Mammary epithelial cell (primary cell): ENCODE measurements at regions of chr2 and their contacts with region 1.

Region 1: DNA sequence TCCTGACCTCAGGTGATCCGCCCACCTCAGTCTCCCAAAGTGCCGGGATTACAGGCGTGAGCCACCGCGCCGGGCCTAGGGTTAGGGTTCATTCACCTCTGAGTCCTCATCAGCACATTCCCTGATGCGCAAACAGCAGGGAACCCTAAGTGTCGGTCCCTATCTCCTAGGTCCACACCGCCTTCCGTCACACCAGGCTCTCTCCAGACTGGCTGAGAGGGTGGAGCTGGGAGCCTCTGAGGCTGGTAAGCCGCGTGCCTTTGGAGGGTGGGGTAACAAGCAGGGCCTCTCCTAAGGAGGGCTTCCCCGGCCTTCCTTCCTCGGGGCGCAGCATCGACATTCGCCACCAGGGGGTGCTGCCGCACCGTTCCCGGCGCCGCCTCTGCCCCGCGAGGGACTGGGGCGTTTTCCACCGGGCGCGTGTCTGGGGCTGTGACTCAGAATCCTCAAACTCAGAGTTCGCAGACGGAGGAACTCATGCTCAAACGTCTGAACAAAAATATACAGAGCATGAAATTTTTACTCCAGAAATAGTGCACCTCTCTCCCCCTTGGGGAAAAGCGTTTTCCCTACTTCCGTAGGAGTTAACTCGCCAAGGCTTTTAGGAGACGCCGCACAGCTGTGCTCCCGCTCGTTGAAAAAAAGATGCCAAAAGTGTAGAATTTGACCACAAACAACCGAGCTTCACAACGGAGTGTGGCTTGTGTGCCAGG is 63.9 kb upstream of the ASAP2 start:
- DNase-seq: peak; percentile 85
- H3K4me3 ChIP-seq: peak overlapping the region in 2 of 3 experiments; percentile 10 to 19
- H3K27ac ChIP-seq: peak overlapping the region; percentile 48
- H3K4me1 ChIP-seq: peaks cover 7% of the 10 kb centered on the region
- H3K27me3 ChIP-seq: no peaks in the 10 kb centered on the region
- CTCF ChIP-seq: peak; percentile 74 to 98

Region 2: DNA sequence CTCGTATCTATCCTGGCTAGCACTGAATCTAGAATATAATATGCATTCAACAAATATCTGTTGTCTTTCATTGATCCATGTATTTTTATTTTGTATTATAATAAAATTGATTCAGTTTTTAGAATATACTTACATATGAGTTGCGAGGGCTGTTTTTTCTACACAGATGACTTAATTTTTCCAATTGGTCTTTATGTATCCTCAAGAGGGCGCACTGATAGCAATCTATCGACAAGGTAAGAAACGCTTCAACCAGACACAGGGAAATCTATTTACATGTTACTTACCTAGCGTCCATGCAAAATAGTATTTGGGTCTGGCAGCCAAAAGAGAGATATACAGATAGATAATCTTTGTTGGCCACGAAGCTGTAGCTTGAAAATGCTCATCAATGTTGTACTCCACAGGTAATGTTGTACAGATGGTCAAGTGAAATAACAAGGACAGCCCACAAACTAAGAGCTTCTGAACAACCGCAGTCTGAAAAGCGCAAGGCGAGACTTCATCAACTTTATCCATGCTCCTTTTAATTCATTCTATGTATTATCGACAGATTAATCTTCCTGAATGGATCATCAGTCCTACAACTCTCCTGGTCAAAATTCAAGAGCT is 269.8 kb before region 1 on chr2:
- CTCF ChIA-PET with region 1: no interaction called
- dilution Hi-C with region 1: no loop called
- in situ Hi-C with region 1: loop called (anchors 10 kb)
- intact Hi-C with region 1: loop called (anchors 1 kb)
- DNase-seq: peak; percentile 37
- H3K4me3 ChIP-seq: no peak overlapping the region
- H3K27ac ChIP-seq: no peak overlapping the region
- H3K4me1 ChIP-seq: no peaks in the 10 kb centered on the region
- H3K27me3 ChIP-seq: no peaks in the 10 kb centered on the region
- CTCF ChIP-seq: peak; percentile 44 to 65

Region 3: DNA sequence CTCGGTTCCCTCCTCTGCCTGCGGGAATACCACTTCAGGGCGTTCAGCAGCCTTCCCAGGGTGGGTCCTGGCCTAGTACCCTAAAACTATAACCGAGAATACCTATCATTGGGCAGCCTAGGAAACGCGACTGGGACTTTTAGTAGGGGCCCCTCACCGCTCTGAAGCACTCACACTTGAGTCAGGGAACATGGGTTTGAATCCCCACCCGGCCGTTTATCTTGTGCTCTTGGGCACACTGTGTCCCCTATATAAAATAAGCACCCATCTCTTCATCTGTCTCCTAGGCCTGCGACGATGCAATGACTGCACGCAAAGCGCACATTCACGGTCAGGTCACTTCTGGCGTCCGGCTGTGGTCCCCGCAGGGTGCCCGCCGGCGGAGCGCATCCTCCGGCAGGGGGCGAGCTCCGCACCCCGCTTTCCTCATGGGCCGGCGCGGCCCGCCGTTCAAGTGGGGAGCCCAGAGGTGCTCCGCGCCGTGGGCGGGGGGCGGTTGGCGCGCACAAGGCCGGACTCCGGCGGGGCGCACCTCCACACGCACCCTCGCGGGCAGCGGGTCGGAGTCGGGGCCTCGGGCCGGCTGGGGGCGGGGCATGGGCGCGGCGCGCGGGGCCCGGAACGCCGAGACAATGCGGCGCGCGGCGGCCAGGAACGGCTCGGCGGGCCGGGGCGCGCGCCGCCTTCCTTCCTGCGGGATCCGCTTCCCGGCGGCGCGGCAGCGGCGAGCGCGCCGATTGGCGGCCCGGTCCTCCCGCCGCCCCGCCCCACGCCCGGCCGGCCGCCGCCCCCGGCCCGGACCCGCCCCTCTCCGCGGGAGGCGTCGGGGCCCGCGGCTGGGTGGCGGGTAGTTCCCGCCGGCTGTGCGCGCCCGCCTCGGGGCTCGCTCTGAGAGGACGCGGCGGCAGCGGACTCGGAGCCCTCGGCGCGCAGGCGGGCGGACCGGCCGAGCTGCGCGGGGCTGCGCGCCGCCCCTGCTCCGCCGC is 63.5 kb after region 1 on chr2 and contains the start of gene ASAP2:
- CTCF ChIA-PET with region 1: no interaction called
- dilution Hi-C with region 1: loop called (anchors 5 kb)
- in situ Hi-C with region 1: no loop called
- intact Hi-C with region 1: loop called (anchors 1 kb)
- DNase-seq: peak; percentile 70
- H3K4me3 ChIP-seq: peak within 1 kb of the TSS; percentile 65 to 98 (median 85)
- H3K27ac ChIP-seq: peak within 1 kb of the TSS; percentile 79
- H3K4me1 ChIP-seq: peaks cover 13% of the 10 kb centered on the region
- H3K27me3 ChIP-seq: no peaks in the 10 kb centered on the region
- CTCF ChIP-seq: peak; percentile 60 to 80
- total RNA-seq, gene ASAP2: 40.8 to 137 TPM

Region 4: DNA sequence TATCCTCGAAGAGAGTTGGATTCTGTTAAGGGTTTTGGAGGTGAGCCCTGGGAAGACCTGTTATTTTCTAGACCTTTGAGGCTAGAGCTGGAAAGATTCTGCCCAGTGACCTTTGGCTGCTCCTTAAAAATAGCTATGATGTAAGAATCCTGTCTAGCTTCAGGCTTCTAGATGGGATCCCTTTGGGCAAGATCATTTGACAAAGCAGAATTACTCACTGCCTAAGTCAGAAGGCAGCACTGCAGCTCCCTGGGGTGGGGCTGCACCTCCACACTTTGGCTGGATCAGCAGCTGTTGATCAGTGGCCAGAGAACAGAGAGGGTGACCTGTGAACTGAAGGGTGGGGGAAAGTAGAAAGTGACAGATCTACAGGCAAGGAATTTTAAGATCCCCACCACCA is 167.7 kb after region 1 on chr2:
- CTCF ChIA-PET with region 1: no interaction called
- dilution Hi-C with region 1: no loop called
- in situ Hi-C with region 1: no loop called
- intact Hi-C with region 1: loop called (anchors 2 kb)
- DNase-seq: peak; percentile 93
- H3K4me3 ChIP-seq: no peak overlapping the region
- H3K27ac ChIP-seq: peak overlapping the region; percentile 95
- H3K4me1 ChIP-seq: peaks cover 69% of the 10 kb centered on the region
- H3K27me3 ChIP-seq: no peaks in the 10 kb centered on the region
- CTCF ChIP-seq: no peak

Region 5: DNA sequence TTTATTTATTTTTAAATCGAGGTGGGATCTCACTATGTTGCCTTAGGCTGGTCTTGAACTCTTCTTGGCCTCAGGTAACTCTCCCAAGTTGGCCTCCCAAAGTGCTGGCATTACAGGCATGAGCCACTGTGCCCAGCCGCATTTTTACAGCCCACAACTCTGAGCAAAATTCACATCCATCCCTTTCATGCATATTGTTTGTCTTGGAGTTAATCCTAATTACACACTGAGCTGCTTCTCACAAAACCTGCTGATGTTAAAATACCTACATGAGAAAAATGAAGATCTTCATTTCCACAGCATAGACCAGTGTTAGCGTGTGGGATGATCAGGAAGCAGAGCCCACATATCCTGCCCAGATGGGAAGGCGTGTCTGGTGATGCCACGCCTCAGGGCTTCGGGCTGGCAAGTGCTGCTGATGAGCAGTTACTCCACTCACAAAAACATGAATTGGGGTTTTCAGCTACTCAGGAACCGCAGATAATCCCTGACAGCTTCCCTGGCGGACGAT is 266.0 kb after region 1 on chr2:
- CTCF ChIA-PET with region 1: no interaction called
- dilution Hi-C with region 1: no loop called
- in situ Hi-C with region 1: no loop called
- intact Hi-C with region 1: loop called (anchors 5 kb)
- DNase-seq: peak; percentile 87
- H3K4me3 ChIP-seq: no peak overlapping the region
- H3K27ac ChIP-seq: peak overlapping the region; percentile 16
- H3K4me1 ChIP-seq: peaks cover 13% of the 10 kb centered on the region
- H3K27me3 ChIP-seq: no peaks in the 10 kb centered on the region
- CTCF ChIP-seq: no peak

Region 6: DNA sequence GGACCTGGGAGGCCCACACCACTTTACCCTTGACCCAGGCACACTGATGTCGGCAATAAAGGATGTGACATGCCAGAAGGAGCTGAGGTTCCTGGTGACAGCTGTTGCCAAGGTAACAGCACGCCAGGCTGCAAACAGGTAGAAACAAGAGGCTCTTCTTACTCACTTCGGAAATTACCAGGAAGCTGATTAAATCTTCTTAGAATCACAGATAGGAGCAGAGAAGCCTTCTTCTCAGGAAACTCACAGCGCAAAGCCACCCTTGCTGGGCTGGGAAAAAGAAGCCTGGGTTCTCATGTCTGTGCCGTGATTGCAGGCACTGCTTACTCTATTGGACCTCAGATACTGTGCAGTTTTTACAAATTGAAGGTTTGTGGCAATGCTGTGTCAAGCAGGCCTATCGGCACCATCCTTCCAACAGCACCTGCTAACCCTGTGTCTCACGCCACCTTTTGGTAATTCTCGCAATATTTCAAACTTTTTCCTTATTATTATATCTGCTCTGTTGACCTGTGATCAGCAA is 639.6 kb after region 1 on chr2:
- CTCF ChIA-PET with region 1: no interaction called
- dilution Hi-C with region 1: no loop called
- in situ Hi-C with region 1: no loop called
- intact Hi-C with region 1: loop called (anchors 10 kb)
- DNase-seq: peak; percentile 88
- H3K4me3 ChIP-seq: no peak overlapping the region
- H3K27ac ChIP-seq: peak overlapping the region; percentile 79
- H3K4me1 ChIP-seq: peaks cover 28% of the 10 kb centered on the region
- H3K27me3 ChIP-seq: no peaks in the 10 kb centered on the region
- CTCF ChIP-seq: no peak